ENCODE measurements at regions of chr6 and their contacts with region 1.

Region 1: GRCh38 chr6:125798734-125799508 is 8.2 kb downstream of the NCOA7 start:
- DNase-seq: no peak
- H3K4me3 ChIP-seq: peak overlapping the region in 1 of 59 donors; percentile 6
- H3K27ac ChIP-seq: peak overlapping the region in 40 of 59 donors; percentile 3 to 63 (median 40)
- H3K27me3 ChIP-seq: no peaks in the 10 kb centered on the region
- CTCF ChIP-seq: no peak

Region 2: GRCh38 chr6:125906158-125906998 is 107.5 kb after region 1 on chr6:
- intact Hi-C with region 1: loop called in 1 of 2 experiments (anchors 5 kb)
- DNase-seq: no peak
- H3K4me3 ChIP-seq: no peak overlapping the region
- H3K27ac ChIP-seq: peak overlapping the region in 29 of 59 donors; percentile 1 to 93 (median 41)
- H3K27me3 ChIP-seq: no peaks in the 10 kb centered on the region
- CTCF ChIP-seq: peak in 55 of 56 donors; percentile 18 to 68 (median 53)

Region 3: DNA sequence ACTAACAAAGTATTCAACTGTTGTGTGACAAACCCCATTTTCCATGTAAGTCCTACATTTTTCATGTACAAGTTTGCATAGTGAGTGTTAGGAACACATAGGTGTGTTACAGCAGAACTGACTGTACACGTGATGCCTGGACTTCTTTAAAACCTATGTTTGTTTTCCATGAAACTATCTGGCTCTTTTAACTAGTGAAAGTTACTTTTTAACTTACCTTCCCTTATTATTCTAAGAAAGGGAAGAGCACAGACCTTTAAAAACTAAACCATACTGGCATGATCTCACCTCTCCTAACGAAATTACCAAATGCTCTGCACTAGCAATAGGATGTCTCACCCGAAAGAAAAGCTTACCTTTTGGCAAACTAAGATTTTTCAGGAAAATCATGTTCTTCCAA is 628.8 kb after region 1 on chr6:
- intact Hi-C with region 1: no loop called
- DNase-seq: no peak
- H3K4me3 ChIP-seq: no peak overlapping the region
- H3K27ac ChIP-seq: no peak overlapping the region
- H3K27me3 ChIP-seq: no peaks in the 10 kb centered on the region
- CTCF ChIP-seq: no peak

Measured in dorsolateral prefrontal cortex (tissue), 120 donors.